ENCODE measurements at regions of chr12 and their contacts with region 1.

Region 1: GRCh38 chr12:111942557-111942956 is 70.4 kb downstream of the TMEM116 start:
- DNase-seq: no peak
- H3K4me3 Mint-ChIP-seq: no peak overlapping the region
- H3K27ac Mint-ChIP-seq: peak overlapping the region; percentile 77
- H3K4me1 Mint-ChIP-seq: peaks cover 13% of the 10 kb centered on the region
- H3K27me3 Mint-ChIP-seq: no peaks in the 10 kb centered on the region

Region 2: GRCh38 chr12:111201036-111201435 is 741.5 kb before region 1 on chr12:
- intact Hi-C with region 1: no loop called
- DNase-seq: no peak
- H3K4me3 Mint-ChIP-seq: no peak overlapping the region
- H3K27ac Mint-ChIP-seq: no peak overlapping the region
- H3K4me1 Mint-ChIP-seq: no peaks in the 10 kb centered on the region
- H3K27me3 Mint-ChIP-seq: peaks cover 17% of the 10 kb centered on the region

Region 3: GRCh38 chr12:112418608-112419298 is 476.2 kb after region 1 on chr12 and contains the start of gene PTPN11:
- intact Hi-C with region 1: loop called (anchors 5 kb)
- DNase-seq: peak; percentile 98
- H3K4me3 Mint-ChIP-seq: peak within 1 kb of the TSS; percentile 97
- H3K27ac Mint-ChIP-seq: peak within 1 kb of the TSS; percentile 99
- H3K4me1 Mint-ChIP-seq: peaks cover 42% of the 10 kb centered on the region
- H3K27me3 Mint-ChIP-seq: peaks cover 5% of the 10 kb centered on the region
- total RNA-seq, gene PTPN11: 173 and 177 TPM in 2 replicates

Measured in activated CD4-positive, alpha-beta T cell treated with anti-CD3 and anti-CD28 coated beads, Interleukin-2, amount 10 ng/mL, durations not matched to agents 24 days and 14 days (primary cell).